Mammary epithelial cell (primary cell): ENCODE measurements at regions of chr10 and their contacts with region 1.

Region 1: DNA sequence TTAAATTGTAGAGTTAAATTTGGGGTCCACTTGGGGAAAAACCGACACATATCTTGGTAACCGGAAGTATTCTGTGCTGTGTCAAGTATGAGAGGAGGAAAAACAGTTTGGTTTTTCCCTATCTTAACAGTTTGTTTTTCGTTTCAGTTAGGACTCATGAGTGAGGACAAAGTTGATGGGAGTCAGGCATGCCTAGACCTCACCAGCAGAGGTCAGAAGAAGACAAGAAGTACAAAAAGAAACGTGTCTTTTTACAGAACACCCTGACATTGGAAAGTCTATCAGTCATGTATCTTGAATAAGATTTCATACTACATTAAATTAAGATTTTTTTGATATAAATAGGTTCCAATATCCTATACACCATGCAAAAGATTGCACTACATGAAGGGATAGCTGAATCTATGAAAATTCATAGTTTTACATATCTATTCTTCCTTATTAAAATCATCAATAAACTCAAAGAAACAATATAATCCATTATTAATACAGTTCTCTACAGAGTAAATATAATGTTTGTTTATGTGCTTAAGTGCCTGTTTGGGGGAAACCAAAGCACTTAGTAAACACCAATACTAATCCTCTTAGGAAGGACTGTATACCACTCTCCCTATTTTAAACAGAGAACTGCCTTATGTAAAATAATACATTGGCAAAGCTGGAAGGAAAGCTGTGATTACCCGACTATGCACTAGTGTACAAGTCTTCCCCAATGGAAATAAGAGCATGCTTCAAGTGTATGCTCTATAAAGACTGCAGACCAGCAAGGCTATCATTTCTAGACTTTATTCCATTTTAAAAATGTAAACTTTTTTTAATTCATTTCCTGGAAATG is 95.6 kb downstream of the USP6NL start:
- DNase-seq: peak; percentile 56
- H3K4me3 ChIP-seq: no peak overlapping the region
- H3K27ac ChIP-seq: no peak overlapping the region
- H3K4me1 ChIP-seq: no peaks in the 10 kb centered on the region
- H3K27me3 ChIP-seq: no peaks in the 10 kb centered on the region
- CTCF ChIP-seq: peak; percentile 88

Region 2: GRCh38 chr10:11611248-11612020 is 95.6 kb after region 1 on chr10 and contains the start of gene USP6NL:
- CTCF ChIA-PET with region 1: no interaction called
- dilution Hi-C with region 1: no loop called
- in situ Hi-C with region 1: no loop called
- intact Hi-C with region 1: loop called (anchors 2 kb)
- DNase-seq: peak; percentile 82
- H3K4me3 ChIP-seq: peak within 1 kb of the TSS; percentile 74 to 92 (median 87)
- H3K27ac ChIP-seq: peak within 1 kb of the TSS; percentile 61
- H3K4me1 ChIP-seq: peaks cover 13% of the 10 kb centered on the region
- H3K27me3 ChIP-seq: no peaks in the 10 kb centered on the region
- CTCF ChIP-seq: no peak
- total RNA-seq, gene USP6NL: 12.2 to 13.9 TPM

Region 3: DNA sequence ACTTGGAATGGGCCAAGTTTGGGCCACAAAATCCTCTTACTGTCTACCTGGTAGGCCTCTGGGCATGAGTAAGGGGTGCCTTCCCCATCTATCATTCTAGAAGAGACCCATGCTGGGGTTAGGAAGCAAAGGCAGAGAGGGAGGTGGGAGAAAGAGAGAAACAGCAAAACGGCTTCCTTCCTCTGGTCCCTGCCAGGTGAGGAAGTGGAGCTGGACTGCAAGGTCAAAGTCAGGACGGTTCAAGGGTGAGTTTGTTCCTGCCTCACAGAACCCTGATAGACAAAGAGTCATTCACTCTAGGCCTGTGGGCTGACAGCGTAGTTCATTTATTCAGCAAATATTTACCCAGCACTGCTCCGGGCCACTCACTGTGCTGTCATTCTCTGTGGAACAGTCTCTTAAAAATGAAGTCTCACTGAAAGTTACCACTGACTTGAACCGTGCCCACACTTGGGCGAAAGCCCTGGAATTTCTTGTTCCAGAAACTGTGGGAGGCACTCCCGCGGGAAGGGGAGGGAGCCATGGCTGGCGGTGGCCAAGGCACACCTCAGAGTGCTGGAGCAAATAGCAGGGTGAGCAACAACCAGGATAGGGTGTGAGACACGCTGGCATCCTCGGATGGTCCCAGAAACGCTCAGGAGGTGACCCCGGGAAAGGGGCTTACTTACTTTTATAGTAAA is 200.1 kb after region 1 on chr10:
- CTCF ChIA-PET with region 1: interaction called, 6 read pairs
- dilution Hi-C with region 1: no loop called
- in situ Hi-C with region 1: loop called (anchors 5 to 10 kb)
- intact Hi-C with region 1: loop called (anchors 2 kb)
- DNase-seq: peak; percentile 22
- H3K4me3 ChIP-seq: no peak overlapping the region
- H3K27ac ChIP-seq: no peak overlapping the region
- H3K4me1 ChIP-seq: no peaks in the 10 kb centered on the region
- H3K27me3 ChIP-seq: no peaks in the 10 kb centered on the region
- CTCF ChIP-seq: no peak

Region 4: GRCh38 chr10:11724938-11725776 is 209.3 kb after region 1 on chr10:
- CTCF ChIA-PET with region 1: interaction called, 4 read pairs
- dilution Hi-C with region 1: loop called (anchors 25 kb)
- in situ Hi-C with region 1: loop called (anchors 5 to 10 kb)
- intact Hi-C with region 1: loop called (anchors 1 kb)
- DNase-seq: peak; percentile 44
- H3K4me3 ChIP-seq: no peak overlapping the region
- H3K27ac ChIP-seq: no peak overlapping the region
- H3K4me1 ChIP-seq: no peaks in the 10 kb centered on the region
- H3K27me3 ChIP-seq: peaks cover 1% of the 10 kb centered on the region
- CTCF ChIP-seq: peak; percentile 65 to 86

Region 5: GRCh38 chr10:11757821-11758463 is 242.1 kb after region 1 on chr10:
- CTCF ChIA-PET with region 1: interaction called, 3 read pairs
- dilution Hi-C with region 1: no loop called
- in situ Hi-C with region 1: loop called in 1 of 2 experiments (anchors 5 kb)
- intact Hi-C with region 1: loop called (anchors 1 kb)
- DNase-seq: peak; percentile 91
- H3K4me3 ChIP-seq: no peak overlapping the region
- H3K27ac ChIP-seq: peak overlapping the region; percentile 62
- H3K4me1 ChIP-seq: peaks cover 21% of the 10 kb centered on the region
- H3K27me3 ChIP-seq: no peaks in the 10 kb centered on the region
- CTCF ChIP-seq: peak; percentile 97 to 99

Region 6: GRCh38 chr10:11986593-11987216 is 470.9 kb after region 1 on chr10:
- CTCF ChIA-PET with region 1: no interaction called
- dilution Hi-C with region 1: no loop called
- in situ Hi-C with region 1: no loop called
- intact Hi-C with region 1: loop called (anchors 5 kb)
- DNase-seq: peak; percentile 65
- H3K4me3 ChIP-seq: no peak overlapping the region
- H3K27ac ChIP-seq: no peak overlapping the region
- H3K4me1 ChIP-seq: no peaks in the 10 kb centered on the region
- H3K27me3 ChIP-seq: no peaks in the 10 kb centered on the region
- CTCF ChIP-seq: peak; percentile 86 to 90